Ascending aorta (tissue), 2 donors: ENCODE measurements at regions of chr9 and their contacts with region 1.

Region 1: DNA sequence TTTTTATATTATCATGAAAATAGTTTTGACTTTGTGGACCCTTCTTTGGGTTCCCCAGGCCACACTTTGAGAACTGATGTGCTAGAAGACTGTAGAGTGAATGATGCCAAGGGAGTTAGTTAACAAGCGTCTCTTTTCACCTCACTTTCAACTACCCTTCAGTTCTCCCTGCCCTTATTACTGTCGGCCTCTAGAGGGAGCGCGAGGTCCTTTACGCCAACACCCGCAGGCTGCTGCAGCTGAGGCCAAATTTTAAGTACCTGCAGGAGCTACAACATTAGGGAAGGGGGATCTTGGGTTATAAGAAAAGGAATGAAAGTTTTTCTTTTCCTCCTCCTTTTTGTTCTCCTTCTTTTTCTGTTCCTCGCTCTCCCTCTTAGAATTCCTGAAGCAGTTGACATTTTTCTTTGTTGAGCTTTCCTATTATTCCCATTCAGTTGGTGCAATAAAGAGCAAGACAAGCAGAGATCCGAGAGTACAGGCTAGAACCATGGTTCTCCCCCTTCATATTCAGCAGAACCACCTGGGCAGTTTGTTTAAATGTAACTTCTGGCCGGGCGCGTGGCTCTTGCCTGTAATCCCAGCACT is 84.0 kb downstream of the ZFAND5 start:
- DNase-seq: peak in 1 of 2 donors; percentile 77
- H3K4me3 ChIP-seq: no peak overlapping the region
- H3K27ac ChIP-seq: no peak overlapping the region
- H3K4me1 ChIP-seq: no peaks in the 10 kb centered on the region
- H3K27me3 ChIP-seq: no peaks in the 10 kb centered on the region
- CTCF ChIP-seq: peak; percentile 70 to 92 (median 82)

Region 2: DNA sequence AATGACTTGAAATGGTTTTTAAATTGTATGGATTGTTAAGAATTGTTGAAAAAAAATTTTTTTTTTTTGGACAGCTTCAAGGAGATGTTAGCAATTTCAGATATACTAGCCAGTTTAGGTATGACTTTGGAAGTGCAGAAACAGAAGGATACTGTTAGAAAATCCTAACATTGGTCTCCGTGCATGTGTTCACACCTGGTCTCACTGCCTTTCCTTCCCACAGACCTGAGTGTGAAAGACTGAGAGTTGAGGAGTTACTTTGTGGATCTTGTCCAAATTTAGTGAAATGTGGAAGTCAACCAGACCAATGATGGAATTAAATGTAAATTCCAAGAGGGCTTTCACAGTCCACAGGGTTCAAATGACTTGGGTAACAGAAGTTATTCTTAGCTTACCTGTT is 29.4 kb before region 1 on chr9:
- intact Hi-C with region 1: no loop called
- DNase-seq: no peak
- H3K4me3 ChIP-seq: no peak overlapping the region
- H3K27ac ChIP-seq: no peak overlapping the region
- H3K4me1 ChIP-seq: no peaks in the 10 kb centered on the region
- H3K27me3 ChIP-seq: no peaks in the 10 kb centered on the region
- CTCF ChIP-seq: no peak

Region 3: DNA sequence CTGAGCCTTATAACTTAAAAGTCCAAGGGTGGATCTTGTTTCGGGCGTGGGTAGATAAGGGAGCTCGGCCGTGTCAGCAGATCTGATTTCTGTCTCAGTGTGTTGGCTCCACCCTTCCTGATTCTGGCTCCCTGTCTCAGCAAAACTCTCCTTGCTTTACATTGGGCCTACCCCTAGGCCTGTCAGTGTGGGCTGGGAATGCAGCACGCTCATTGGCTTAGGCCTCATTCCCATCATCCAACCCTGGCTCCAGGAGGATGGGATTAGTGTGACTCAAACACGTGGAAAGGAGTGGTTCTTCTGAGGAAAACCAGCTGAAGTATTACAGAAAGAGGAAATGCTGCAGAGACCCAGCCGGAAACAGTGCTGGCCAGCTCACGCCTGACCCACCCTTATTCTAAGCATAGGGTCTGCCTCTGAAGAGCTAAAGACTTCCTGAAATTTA is 24.1 kb after region 1 on chr9:
- intact Hi-C with region 1: no loop called
- DNase-seq: peak; percentile 91 to 93
- H3K4me3 ChIP-seq: peak overlapping the region; percentile 57 to 62
- H3K27ac ChIP-seq: peak overlapping the region; percentile 78 to 81
- H3K4me1 ChIP-seq: no peaks in the 10 kb centered on the region
- H3K27me3 ChIP-seq: no peaks in the 10 kb centered on the region
- CTCF ChIP-seq: no peak

Region 4: DNA sequence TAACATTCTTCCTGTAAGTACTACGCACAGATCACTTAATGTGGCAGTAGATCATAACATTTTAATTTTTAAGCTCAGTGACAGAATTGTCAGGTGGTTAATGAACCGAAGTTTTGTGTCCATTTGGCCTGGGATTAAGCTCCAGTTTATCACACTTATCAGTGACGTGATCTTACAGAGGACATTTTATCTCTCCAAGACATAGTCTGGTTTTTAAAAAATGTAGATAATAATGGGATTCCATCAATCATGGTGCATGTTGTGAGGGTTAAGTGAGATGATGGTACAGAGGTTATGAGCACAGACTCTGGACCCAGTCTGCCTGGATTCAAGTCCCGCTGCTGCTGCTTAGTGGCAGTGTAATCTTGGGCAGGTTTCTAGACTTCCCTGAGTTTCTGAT is 150.0 kb after region 1 on chr9:
- intact Hi-C with region 1: no loop called
- DNase-seq: no peak
- H3K4me3 ChIP-seq: no peak overlapping the region
- H3K27ac ChIP-seq: no peak overlapping the region
- H3K4me1 ChIP-seq: peaks cover 0 to 2% of the 10 kb centered on the region in 2 donors
- H3K27me3 ChIP-seq: no peaks in the 10 kb centered on the region
- CTCF ChIP-seq: no peak

Region 5: DNA sequence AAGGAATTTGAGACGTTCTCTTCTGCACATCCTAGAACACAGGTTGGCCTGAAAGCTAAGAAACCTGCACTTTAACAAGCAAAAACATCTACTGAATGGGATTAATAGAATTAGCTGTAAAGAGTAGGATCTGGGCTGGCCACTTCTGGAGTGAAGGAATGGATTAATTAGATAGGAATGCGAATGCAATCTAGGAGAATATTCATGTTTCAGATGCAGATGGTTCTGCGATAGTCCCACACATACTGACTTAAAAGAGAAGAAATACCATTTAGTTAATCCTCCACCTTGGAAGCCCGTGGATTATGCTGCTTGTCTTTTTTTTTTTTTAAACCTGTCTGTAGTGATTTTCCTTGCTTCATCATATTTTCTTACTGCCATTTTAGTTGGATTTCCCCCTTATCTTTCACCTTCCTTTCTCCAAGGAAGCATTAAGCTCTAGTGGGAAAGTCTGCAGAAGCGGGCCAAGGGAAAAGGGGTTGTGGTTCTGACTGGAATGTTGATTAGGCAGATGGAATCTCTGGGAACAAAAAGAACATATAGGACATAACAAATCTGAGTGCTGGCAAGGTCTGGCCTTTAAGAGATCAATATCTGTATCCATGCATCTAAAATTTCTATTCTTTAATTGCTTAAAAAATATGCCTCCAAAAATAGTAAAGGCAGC is 519.5 kb after region 1 on chr9:
- intact Hi-C with region 1: no loop called
- DNase-seq: no peak
- H3K4me3 ChIP-seq: no peak overlapping the region
- H3K27ac ChIP-seq: no peak overlapping the region
- H3K4me1 ChIP-seq: no peaks in the 10 kb centered on the region
- H3K27me3 ChIP-seq: no peaks in the 10 kb centered on the region
- CTCF ChIP-seq: no peak

Region 6: DNA sequence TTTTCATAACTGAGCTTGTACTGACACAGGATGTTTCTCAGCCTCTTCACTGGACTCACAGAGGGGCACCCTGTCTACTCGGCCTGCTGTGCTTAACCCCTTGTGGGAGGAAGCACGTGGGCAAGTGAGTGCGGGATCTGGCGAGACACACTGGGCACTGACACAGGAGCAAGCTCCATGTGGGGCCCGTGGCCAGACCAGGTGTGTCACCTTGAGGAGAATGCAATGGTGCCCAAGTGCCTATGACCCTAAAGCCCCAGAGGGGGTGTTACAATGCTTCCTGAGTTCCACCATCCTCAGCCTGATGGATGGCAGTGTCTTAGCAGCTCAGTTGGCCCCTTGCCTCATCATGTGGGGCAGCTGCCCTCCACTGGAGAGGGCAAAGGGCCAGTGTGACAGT is 543.0 kb after region 1 on chr9:
- intact Hi-C with region 1: loop called (anchors 5 kb)
- DNase-seq: no peak
- H3K4me3 ChIP-seq: no peak overlapping the region
- H3K27ac ChIP-seq: no peak overlapping the region
- H3K4me1 ChIP-seq: no peaks in the 10 kb centered on the region
- H3K27me3 ChIP-seq: no peaks in the 10 kb centered on the region
- CTCF ChIP-seq: no peak